ENCODE measurements at regions of chr6 and their contacts with region 1.

Region 1: GRCh38 chr6:136344420-136344819 is 54.8 kb upstream of the BCLAF1 start:
- DNase-seq: no peak
- ATAC-seq: no peak
- H3K4me3 ChIP-seq: no peak overlapping the region
- H3K27ac ChIP-seq: no peak overlapping the region
- H3K4me1 ChIP-seq: no peaks in the 10 kb centered on the region
- H3K27me3 ChIP-seq: no peaks in the 10 kb centered on the region
- CTCF ChIP-seq: no peak
- POLR2A ChIP-seq: no peak

Region 2: DNA sequence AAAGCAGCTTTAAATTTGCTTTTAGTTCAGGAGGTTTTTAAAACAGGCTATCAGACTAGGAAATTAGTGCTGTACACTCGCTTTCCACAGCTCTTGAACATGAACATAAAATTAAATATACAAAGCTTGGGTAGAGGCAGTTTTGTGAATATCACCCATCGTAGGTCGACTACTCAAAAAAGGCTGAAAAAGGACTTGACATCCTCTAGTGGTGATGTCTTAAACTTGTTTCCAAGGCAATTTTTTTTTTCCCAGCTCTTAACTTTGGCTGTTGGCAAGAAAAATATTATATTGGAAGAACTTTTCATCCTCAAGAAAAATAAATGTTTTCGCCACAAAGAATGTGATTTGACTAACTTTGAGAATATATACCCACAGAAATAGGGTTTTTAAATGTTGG is 202.9 kb after region 1 on chr6:
- intact Hi-C with region 1: loop called (anchors 10 kb)
- DNase-seq: no peak
- ATAC-seq: no peak
- H3K4me3 ChIP-seq: no peak overlapping the region
- H3K27ac ChIP-seq: no peak overlapping the region
- H3K4me1 ChIP-seq: peaks cover 42% of the 10 kb centered on the region
- H3K27me3 ChIP-seq: no peaks in the 10 kb centered on the region
- CTCF ChIP-seq: peak in 6 of 7 experiments; percentile 29 to 66 (median 62)
- POLR2A ChIP-seq: no peak